Ovary (tissue), 10 donors: ENCODE measurements at regions of chr12 and their contacts with region 1.

Region 1: GRCh38 chr12:44881197-44881596 is 5.1 kb upstream of the NELL2 start:
- DNase-seq: no peak
- H3K4me3 ChIP-seq: no peak overlapping the region
- H3K27ac ChIP-seq: no peak overlapping the region
- H3K4me1 ChIP-seq: no peaks in the 10 kb centered on the region
- H3K27me3 ChIP-seq: no peaks in the 10 kb centered on the region
- CTCF ChIP-seq: no peak
- EP300 ChIP-seq: no peak
- POLR2A ChIP-seq: no peak

Region 2: GRCh38 chr12:43444940-43445564 is 1436.1 kb before region 1 on chr12:
- intact Hi-C with region 1: loop called in 1 of 4 experiments (anchors 5 kb)
- DNase-seq: no peak
- H3K4me3 ChIP-seq: no peak overlapping the region
- H3K27ac ChIP-seq: no peak overlapping the region
- H3K4me1 ChIP-seq: no peaks in the 10 kb centered on the region
- H3K27me3 ChIP-seq: no peaks in the 10 kb centered on the region
- CTCF ChIP-seq: peak in 1 of 3 donors; percentile 8
- EP300 ChIP-seq: no peak
- POLR2A ChIP-seq: no peak

Region 3: GRCh38 chr12:44162961-44163360 is 718.2 kb before region 1 on chr12:
- intact Hi-C with region 1: no loop called
- DNase-seq: no peak
- H3K4me3 ChIP-seq: no peak overlapping the region
- H3K27ac ChIP-seq: no peak overlapping the region
- H3K4me1 ChIP-seq: no peaks in the 10 kb centered on the region
- H3K27me3 ChIP-seq: no peaks in the 10 kb centered on the region
- CTCF ChIP-seq: no peak
- EP300 ChIP-seq: no peak
- POLR2A ChIP-seq: no peak